CD8-positive, alpha-beta T cell (primary cell): ENCODE measurements at regions of chr3 and their contacts with region 1.

Region 1: GRCh38 chr3:11803977-11804892 is 42.5 kb downstream of the TAMM41 start:
- DNase-seq: peak in 7 of 9 experiments; percentile 21 to 70 (median 46)
- ATAC-seq: peak; percentile 82
- H3K4me3 ChIP-seq: no peak overlapping the region
- H3K4me3 Mint-ChIP-seq: no peak overlapping the region
- H3K27ac ChIP-seq: no peak overlapping the region
- H3K27ac Mint-ChIP-seq: no peak overlapping the region
- H3K4me1 ChIP-seq: no peaks in the 10 kb centered on the region
- H3K4me1 Mint-ChIP-seq: peaks cover 4% of the 10 kb centered on the region
- H3K27me3 ChIP-seq: no peaks in the 10 kb centered on the region
- H3K27me3 Mint-ChIP-seq: no peaks in the 10 kb centered on the region
- CTCF ChIP-seq: peak; percentile 67

Region 2: DNA sequence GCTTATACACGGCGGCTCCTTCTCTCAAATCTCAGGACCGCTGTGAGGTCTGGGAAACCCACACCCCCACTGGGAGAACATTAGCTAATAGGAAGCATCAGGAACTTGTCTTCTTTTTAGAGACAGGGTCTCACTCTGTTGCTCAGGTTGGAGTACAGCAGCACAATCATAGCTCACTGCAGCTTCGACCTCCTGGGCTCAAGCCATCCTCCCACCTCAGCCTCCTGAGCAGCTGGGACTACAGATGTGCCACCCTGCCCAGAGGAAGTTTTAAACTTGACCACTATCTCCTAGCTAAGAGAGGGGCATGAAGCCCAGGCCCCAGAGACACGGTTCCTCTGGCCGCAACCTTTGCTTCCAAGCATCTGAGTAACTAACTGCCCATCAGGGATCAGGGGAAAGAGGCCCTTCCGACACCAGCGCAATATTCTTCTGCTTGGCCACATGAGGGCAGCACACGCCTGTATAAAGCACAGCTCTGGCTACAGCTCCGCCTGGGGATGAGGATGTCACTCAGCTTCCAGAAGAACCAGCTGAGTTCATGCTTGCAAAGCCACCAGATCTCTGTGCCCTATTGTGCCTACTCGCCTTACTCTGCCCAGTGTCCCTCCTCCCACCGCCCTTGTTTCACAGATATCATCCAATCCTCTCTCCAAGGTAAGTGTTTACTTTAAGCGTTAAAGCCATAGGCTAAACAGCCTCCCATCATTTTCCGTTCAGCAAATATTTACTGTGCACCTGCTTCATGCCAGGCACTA is 1045.8 kb before region 1 on chr3:
- CTCF ChIA-PET with region 1: no interaction called
- POLR2A ChIA-PET with region 1: no interaction called
- intact Hi-C with region 1: loop called in 1 of 2 experiments (anchors 10 kb)
- DNase-seq: peak in 8 of 9 experiments; percentile 7 to 61 (median 34)
- ATAC-seq: peak; percentile 46
- H3K4me3 ChIP-seq: no peak overlapping the region
- H3K4me3 Mint-ChIP-seq: no peak overlapping the region
- H3K27ac ChIP-seq: no peak overlapping the region
- H3K27ac Mint-ChIP-seq: no peak overlapping the region
- H3K4me1 ChIP-seq: no peaks in the 10 kb centered on the region
- H3K4me1 Mint-ChIP-seq: no peaks in the 10 kb centered on the region
- H3K27me3 ChIP-seq: peaks cover 0 to 4% of the 10 kb centered on the region in 2 experiments
- H3K27me3 Mint-ChIP-seq: peaks cover 36% of the 10 kb centered on the region
- CTCF ChIP-seq: peak; percentile 61

Region 3: GRCh38 chr3:11379233-11379823 is 424.9 kb before region 1 on chr3:
- CTCF ChIA-PET with region 1: interaction called, 15 read pairs
- POLR2A ChIA-PET with region 1: no interaction called
- intact Hi-C with region 1: loop called (anchors 1 kb)
- DNase-seq: peak in 2 of 9 experiments; percentile 51 to 61
- ATAC-seq: peak; percentile 40
- H3K4me3 ChIP-seq: no peak overlapping the region
- H3K4me3 Mint-ChIP-seq: no peak overlapping the region
- H3K27ac ChIP-seq: no peak overlapping the region
- H3K27ac Mint-ChIP-seq: no peak overlapping the region
- H3K4me1 ChIP-seq: no peaks in the 10 kb centered on the region
- H3K4me1 Mint-ChIP-seq: no peaks in the 10 kb centered on the region
- H3K27me3 ChIP-seq: no peaks in the 10 kb centered on the region
- H3K27me3 Mint-ChIP-seq: no peaks in the 10 kb centered on the region
- CTCF ChIP-seq: peak; percentile 58

Region 4: DNA sequence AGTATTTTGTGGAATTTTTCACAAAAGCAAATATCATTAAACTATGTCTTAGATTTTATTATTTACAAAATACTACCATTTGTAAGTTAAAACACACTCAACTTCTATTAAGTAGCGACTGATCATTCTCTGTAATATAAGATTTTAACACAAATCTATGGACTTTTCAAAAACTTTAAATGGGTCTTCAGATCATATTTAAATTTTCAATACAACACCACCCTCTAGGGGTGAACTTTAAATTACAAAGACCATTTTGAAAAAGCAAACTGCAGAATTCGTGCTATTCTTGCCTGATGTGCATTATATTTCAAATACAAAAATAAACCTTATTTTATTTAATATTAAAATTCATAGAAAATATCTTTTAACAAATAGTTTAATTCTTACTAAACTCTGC is 152.3 kb before region 1 on chr3:
- CTCF ChIA-PET with region 1: interaction called, 4 read pairs
- POLR2A ChIA-PET with region 1: no interaction called
- intact Hi-C with region 1: loop called (anchors 1 kb)
- DNase-seq: peak in 2 of 9 experiments; percentile 56 to 67
- ATAC-seq: no peak
- H3K4me3 ChIP-seq: no peak overlapping the region
- H3K4me3 Mint-ChIP-seq: no peak overlapping the region
- H3K27ac ChIP-seq: no peak overlapping the region
- H3K27ac Mint-ChIP-seq: no peak overlapping the region
- H3K4me1 ChIP-seq: peaks cover 11% of the 10 kb centered on the region
- H3K4me1 Mint-ChIP-seq: peaks cover 13% of the 10 kb centered on the region
- H3K27me3 ChIP-seq: no peaks in the 10 kb centered on the region
- H3K27me3 Mint-ChIP-seq: no peaks in the 10 kb centered on the region
- CTCF ChIP-seq: peak; percentile 83

Region 5: GRCh38 chr3:11719406-11720230 is 84.6 kb before region 1 on chr3:
- CTCF ChIA-PET with region 1: interaction called, 3 read pairs
- POLR2A ChIA-PET with region 1: no interaction called
- intact Hi-C with region 1: loop called in 1 of 2 experiments (anchors 10 kb)
- DNase-seq: peak; percentile 54 to 86 (median 79)
- ATAC-seq: peak; percentile 81
- H3K4me3 ChIP-seq: peak overlapping the region; percentile 68 to 73
- H3K4me3 Mint-ChIP-seq: peak overlapping the region; percentile 88
- H3K27ac ChIP-seq: peak overlapping the region in 1 of 2 experiments; percentile 56
- H3K27ac Mint-ChIP-seq: no peak overlapping the region
- H3K4me1 ChIP-seq: peaks cover 15% of the 10 kb centered on the region
- H3K4me1 Mint-ChIP-seq: peaks cover 24% of the 10 kb centered on the region
- H3K27me3 ChIP-seq: no peaks in the 10 kb centered on the region
- H3K27me3 Mint-ChIP-seq: peaks cover 8% of the 10 kb centered on the region
- CTCF ChIP-seq: no peak

Region 6: GRCh38 chr3:11724615-11725342 is 79.5 kb before region 1 on chr3:
- CTCF ChIA-PET with region 1: no interaction called
- POLR2A ChIA-PET with region 1: no interaction called
- intact Hi-C with region 1: loop called (anchors 5 to 10 kb)
- DNase-seq: peak in 2 of 9 experiments; percentile 18 to 28
- ATAC-seq: no peak
- H3K4me3 ChIP-seq: peak overlapping the region in 1 of 2 experiments; percentile 45
- H3K4me3 Mint-ChIP-seq: peak overlapping the region; percentile 67
- H3K27ac ChIP-seq: no peak overlapping the region
- H3K27ac Mint-ChIP-seq: peak overlapping the region; percentile 70
- H3K4me1 ChIP-seq: peaks cover 6% of the 10 kb centered on the region
- H3K4me1 Mint-ChIP-seq: peaks cover 10% of the 10 kb centered on the region
- H3K27me3 ChIP-seq: no peaks in the 10 kb centered on the region
- H3K27me3 Mint-ChIP-seq: peaks cover 22% of the 10 kb centered on the region
- CTCF ChIP-seq: no peak

Region 7: GRCh38 chr3:11964553-11964952 is 160.3 kb after region 1 on chr3:
- CTCF ChIA-PET with region 1: no interaction called
- POLR2A ChIA-PET with region 1: no interaction called
- intact Hi-C with region 1: no loop called
- DNase-seq: no peak
- ATAC-seq: no peak
- H3K4me3 ChIP-seq: no peak overlapping the region
- H3K4me3 Mint-ChIP-seq: no peak overlapping the region
- H3K27ac ChIP-seq: no peak overlapping the region
- H3K27ac Mint-ChIP-seq: no peak overlapping the region
- H3K4me1 ChIP-seq: no peaks in the 10 kb centered on the region
- H3K4me1 Mint-ChIP-seq: no peaks in the 10 kb centered on the region
- H3K27me3 ChIP-seq: no peaks in the 10 kb centered on the region
- H3K27me3 Mint-ChIP-seq: peaks cover 12% of the 10 kb centered on the region
- CTCF ChIP-seq: no peak